ENCODE measurements at regions of chr10 and their contacts with region 1.

Region 1: DNA sequence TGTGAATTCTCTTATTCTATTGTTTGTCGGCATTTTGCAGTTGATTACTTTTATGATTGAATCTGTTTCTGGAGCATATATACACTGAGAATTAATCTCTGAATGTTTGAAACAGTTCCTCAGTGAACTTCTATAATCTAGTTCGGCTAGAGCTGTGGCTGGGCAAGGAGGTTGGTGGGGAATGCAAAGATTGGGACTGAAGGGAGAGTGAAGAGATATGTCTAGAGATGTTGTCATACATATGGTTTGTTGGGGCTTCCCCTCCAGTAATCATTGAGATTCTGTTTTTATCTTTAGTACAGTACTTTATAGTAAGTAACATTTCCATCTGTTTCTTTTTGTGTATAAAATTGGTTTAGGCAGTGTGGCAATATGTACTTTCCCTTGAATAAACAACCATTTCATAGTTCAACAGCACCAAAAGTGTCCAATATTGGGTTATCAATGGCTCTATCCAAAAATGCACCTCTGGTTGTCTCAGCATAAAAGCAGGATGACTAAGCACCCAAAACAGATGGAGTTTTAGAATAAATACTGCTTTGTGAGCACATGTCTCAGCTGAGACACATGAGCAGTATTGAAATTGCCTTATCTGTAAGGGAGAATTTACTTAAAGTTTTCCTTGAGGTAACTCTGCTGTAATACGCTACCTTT is 36.7 kb downstream of the WAC start:
- DNase-seq: no peak

Region 2: GRCh38 chr10:28503114-28503513 is 66.5 kb before region 1 on chr10:
- intact Hi-C with region 1: loop called in 1 of 2 experiments (anchors 2 kb)
- DNase-seq: no peak